PC-3 (cell line): ENCODE measurements at regions of chr15 and their contacts with region 1.

Region 1: DNA sequence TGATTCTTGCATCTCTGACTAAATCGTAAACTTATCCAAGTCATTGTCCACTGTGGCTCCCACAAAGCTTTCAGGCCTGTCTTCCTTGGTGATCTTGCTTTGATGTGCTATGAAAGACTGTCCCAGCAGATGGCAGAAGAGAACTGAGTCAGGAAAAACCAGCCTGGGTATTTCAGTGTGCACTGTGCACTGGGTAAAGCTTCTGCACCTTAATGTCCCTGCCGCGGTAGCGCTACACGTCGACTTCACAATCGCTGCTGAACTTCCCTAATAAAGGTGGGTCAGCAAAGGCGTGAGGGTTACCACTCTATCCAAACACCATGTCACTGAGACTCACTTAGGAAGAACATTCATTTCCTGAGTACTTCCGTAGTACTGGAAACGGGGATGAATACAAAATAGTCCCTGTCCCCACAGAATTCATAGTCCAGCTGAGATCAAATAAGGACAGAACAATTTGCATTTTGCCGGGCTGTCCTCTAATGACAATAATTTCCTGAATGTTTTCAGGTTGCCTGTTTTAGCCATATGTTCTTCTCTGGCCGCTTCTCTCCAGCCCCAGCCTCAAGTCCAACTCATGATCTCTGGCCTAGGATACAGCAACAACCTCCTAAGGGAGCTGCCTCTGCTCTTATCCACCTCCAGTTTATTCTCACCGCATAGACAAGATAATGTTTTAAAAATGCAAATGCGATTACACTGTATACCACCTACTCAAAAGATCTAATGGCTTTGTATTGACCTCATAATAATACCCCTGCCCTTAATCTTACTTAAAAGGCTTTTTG is 83.6 kb upstream of the AKAP13 start:
- DNase-seq: peak; percentile 87
- ATAC-seq: peak; percentile 98
- H3K4me3 ChIP-seq: peak overlapping the region; percentile 61
- H3K27ac ChIP-seq: peak overlapping the region; percentile 41
- H3K4me1 ChIP-seq: peaks cover 8% of the 10 kb centered on the region
- H3K27me3 ChIP-seq: no peaks in the 10 kb centered on the region
- CTCF ChIP-seq: peak; percentile 78

Region 2: GRCh38 chr15:84826369-84826823 is 470.4 kb before region 1 on chr15:
- CTCF ChIA-PET with region 1: no interaction called
- POLR2A ChIA-PET with region 1: no interaction called
- intact Hi-C with region 1: no loop called
- DNase-seq: peak; percentile 67
- ATAC-seq: peak; percentile 71
- H3K4me3 ChIP-seq: no peak overlapping the region
- H3K27ac ChIP-seq: no peak overlapping the region
- H3K4me1 ChIP-seq: no peaks in the 10 kb centered on the region
- H3K27me3 ChIP-seq: no peaks in the 10 kb centered on the region
- CTCF ChIP-seq: peak; percentile 77

Region 3: GRCh38 chr15:85306946-85307708 is 10.3 kb after region 1 on chr15:
- CTCF ChIA-PET with region 1: no interaction called
- POLR2A ChIA-PET with region 1: no interaction called
- intact Hi-C with region 1: no loop called
- DNase-seq: no peak
- ATAC-seq: no peak
- H3K4me3 ChIP-seq: no peak overlapping the region
- H3K27ac ChIP-seq: no peak overlapping the region
- H3K4me1 ChIP-seq: no peaks in the 10 kb centered on the region
- H3K27me3 ChIP-seq: no peaks in the 10 kb centered on the region
- CTCF ChIP-seq: no peak

Region 4: DNA sequence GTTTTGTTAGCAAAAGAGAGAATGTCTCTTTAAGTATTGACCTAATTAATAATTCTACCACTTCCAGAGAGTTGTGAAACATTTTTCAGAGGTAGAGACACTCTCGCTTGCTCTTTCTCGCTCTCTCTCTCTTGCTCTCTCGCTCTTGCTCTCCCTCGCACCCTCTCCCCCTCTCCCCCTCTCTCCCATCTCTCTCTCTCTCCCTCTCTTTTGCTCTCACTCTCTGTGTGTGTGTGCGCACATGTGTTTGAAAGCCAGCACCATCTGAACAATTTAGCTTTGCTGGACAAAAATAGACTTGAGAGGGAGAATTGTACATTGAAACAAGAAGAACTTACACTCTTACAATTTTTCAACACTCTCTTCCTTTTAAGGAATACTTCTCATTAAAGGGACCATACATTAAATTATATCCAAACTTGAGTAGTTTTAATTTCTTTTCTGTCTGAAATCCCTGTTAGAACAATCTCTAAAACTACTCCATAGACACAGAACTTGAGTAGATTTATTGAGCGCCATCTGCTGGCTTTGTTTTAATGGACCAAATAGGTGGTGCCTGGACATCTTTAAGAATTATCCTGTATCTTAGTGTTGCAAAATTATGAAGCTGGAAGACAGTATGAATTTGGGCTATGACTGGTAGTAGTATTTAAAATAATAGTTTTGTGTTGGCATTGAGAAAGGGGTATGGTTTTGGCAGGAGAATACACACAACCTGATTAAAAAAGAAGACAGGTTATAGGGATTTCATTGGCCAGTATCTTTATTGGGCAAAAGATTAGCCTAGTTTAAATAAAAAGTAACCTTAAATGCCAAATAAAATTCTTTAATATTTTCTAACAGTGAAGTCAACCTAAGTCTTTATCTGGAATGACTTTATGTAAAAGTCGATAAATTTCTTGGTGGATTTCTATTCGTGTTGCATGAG is 208.2 kb after region 1 on chr15:
- CTCF ChIA-PET with region 1: no interaction called
- POLR2A ChIA-PET with region 1: no interaction called
- intact Hi-C with region 1: loop called (anchors 1 kb)
- DNase-seq: peak; percentile 73
- ATAC-seq: peak; percentile 76
- H3K4me3 ChIP-seq: no peak overlapping the region
- H3K27ac ChIP-seq: no peak overlapping the region; the same call in 1 of the 2 replicates
- H3K4me1 ChIP-seq: peaks cover 9% of the 10 kb centered on the region; the same call in 1 of the 2 replicates
- H3K27me3 ChIP-seq: no peaks in the 10 kb centered on the region
- CTCF ChIP-seq: peak; percentile 82

Region 5: GRCh38 chr15:85515212-85515611 is 218.4 kb after region 1 on chr15:
- CTCF ChIA-PET with region 1: no interaction called
- POLR2A ChIA-PET with region 1: no interaction called
- intact Hi-C with region 1: no loop called
- DNase-seq: no peak
- ATAC-seq: no peak
- H3K4me3 ChIP-seq: no peak overlapping the region
- H3K27ac ChIP-seq: no peak overlapping the region
- H3K4me1 ChIP-seq: peaks cover 3% of the 10 kb centered on the region; the same call in 1 of the 2 replicates
- H3K27me3 ChIP-seq: no peaks in the 10 kb centered on the region
- CTCF ChIP-seq: no peak